ENCODE measurements at regions of chr3 and their contacts with region 1.

Region 1: GRCh38 chr3:129224984-129225393 is 24.4 kb upstream of the COPG1 start:
- DNase-seq: peak; percentile 32
- ATAC-seq: peak; percentile 74
- H3K4me3 Mint-ChIP-seq: no peak overlapping the region
- H3K27ac Mint-ChIP-seq: peak overlapping the region; percentile 38
- H3K4me1 Mint-ChIP-seq: peaks cover 13% of the 10 kb centered on the region
- H3K27me3 Mint-ChIP-seq: no peaks in the 10 kb centered on the region

Region 2: GRCh38 chr3:129238945-129239706 is 14.1 kb after region 1 on chr3:
- CTCF ChIA-PET with region 1: interaction called, 33 read pairs
- POLR2A ChIA-PET with region 1: no interaction called
- intact Hi-C with region 1: no loop called
- DNase-seq: peak; percentile 55
- ATAC-seq: peak; percentile 83
- H3K4me3 Mint-ChIP-seq: peak overlapping the region; percentile 12
- H3K27ac Mint-ChIP-seq: peak overlapping the region; percentile 67
- H3K4me1 Mint-ChIP-seq: peaks cover 15% of the 10 kb centered on the region
- H3K27me3 Mint-ChIP-seq: no peaks in the 10 kb centered on the region